Psoas muscle (tissue), 8 donors: ENCODE measurements at regions of chr11 and their contacts with region 1.

Region 1: GRCh38 chr11:46876471-46876870 is 30.4 kb upstream of the CKAP5 start:
- DNase-seq: no peak
- ATAC-seq: no peak
- H3K4me3 ChIP-seq: no peak overlapping the region
- H3K27ac ChIP-seq: no peak overlapping the region
- H3K4me1 ChIP-seq: no peaks in the 10 kb centered on the region
- H3K27me3 ChIP-seq: no peaks in the 10 kb centered on the region
- CTCF ChIP-seq: no peak

Region 2: DNA sequence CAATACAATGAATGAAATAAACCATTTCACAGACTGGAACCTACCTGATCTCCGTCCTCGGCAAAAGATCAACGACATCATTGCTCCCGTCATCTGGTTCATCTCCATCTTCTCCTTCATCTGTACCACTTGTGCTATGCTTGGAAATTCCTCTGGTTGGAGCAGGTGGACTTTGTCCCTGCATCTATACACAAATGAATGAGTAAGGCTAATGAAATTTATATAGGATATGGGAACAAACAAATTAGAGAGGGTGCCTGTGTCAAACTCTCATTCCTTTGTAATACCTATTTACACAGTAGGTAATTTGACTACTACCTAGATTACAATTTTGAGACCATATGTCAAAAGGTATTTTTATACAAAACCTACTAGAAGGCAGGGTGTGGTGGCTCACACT is 98.1 kb before region 1 on chr11:
- intact Hi-C with region 1: loop called in 1 of 2 experiments (anchors 10 kb)
- DNase-seq: no peak
- ATAC-seq: no peak
- H3K4me3 ChIP-seq: no peak overlapping the region
- H3K27ac ChIP-seq: no peak overlapping the region
- H3K4me1 ChIP-seq: no peaks in the 10 kb centered on the region
- H3K27me3 ChIP-seq: no peaks in the 10 kb centered on the region
- CTCF ChIP-seq: no peak